ENCODE measurements at regions of chr4 and their contacts with region 1.

Region 1: GRCh38 chr4:25234390-25235370 is 847 bp downstream of the PI4K2B start:
- DNase-seq: peak; percentile 68 to 72 (median 70)
- ATAC-seq: peak; percentile 74 to 81 (median 76)
- H3K4me3 ChIP-seq: peak overlapping the region; percentile 87 to 97 (median 96)
- H3K27ac ChIP-seq: peak overlapping the region; percentile 99 to 100 (median 99)
- H3K4me1 ChIP-seq: peaks cover 0 to 37% (median 3%) of the 10 kb centered on the region in 4 donors
- H3K27me3 ChIP-seq: no peaks in the 10 kb centered on the region
- CTCF ChIP-seq: peak; percentile 47 to 66 (median 50)
- POLR2A ChIP-seq: peak; percentile 25

Region 2: DNA sequence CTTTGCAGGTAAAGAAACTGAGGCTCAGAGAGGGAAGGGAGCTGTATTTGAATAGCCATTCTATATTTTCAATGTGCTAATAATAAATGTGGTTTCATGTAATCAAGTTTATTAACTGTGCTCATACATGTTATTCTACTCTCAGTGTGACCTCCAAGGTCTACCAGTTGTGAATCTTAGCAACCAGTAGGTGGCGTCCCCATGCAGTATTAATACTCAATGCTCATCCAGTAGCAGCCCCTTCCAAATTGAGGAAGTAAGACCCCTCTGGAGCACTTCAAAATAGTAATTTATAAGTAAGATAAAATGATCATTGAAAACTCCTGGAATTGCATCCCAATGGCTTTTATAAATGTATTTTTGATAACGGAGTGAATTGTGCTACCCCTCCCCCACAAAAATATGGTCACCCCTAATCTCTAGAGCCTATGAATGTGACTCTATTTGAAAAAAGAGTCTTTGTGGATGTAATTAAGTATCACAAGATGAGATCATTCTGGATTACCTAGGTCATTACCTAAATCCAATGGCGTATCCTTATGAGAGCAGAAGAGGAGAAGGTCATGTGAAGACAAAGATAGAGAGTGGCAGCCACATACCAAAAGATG is 54.1 kb before region 1 on chr4:
- intact Hi-C with region 1: loop called in 1 of 2 experiments (anchors 5 kb)
- DNase-seq: no peak
- ATAC-seq: peak; percentile 74 to 82 (median 76)
- H3K4me3 ChIP-seq: no peak overlapping the region
- H3K27ac ChIP-seq: no peak overlapping the region
- H3K4me1 ChIP-seq: peaks cover 0 to 14% (median 5%) of the 10 kb centered on the region in 4 donors
- H3K27me3 ChIP-seq: no peaks in the 10 kb centered on the region
- CTCF ChIP-seq: peak; percentile 70 to 74 (median 73)
- POLR2A ChIP-seq: no peak

Region 3: GRCh38 chr4:25421816-25422525 is 187.3 kb after region 1 on chr4:
- intact Hi-C with region 1: no loop called
- DNase-seq: no peak
- ATAC-seq: no peak
- H3K4me3 ChIP-seq: no peak overlapping the region
- H3K27ac ChIP-seq: no peak overlapping the region
- H3K4me1 ChIP-seq: peaks cover 0 to 15% (median 7%) of the 10 kb centered on the region in 4 donors
- H3K27me3 ChIP-seq: no peaks in the 10 kb centered on the region
- CTCF ChIP-seq: no peak
- POLR2A ChIP-seq: no peak